ENCODE measurements at regions of chr15 and their contacts with region 1.

Region 1: DNA sequence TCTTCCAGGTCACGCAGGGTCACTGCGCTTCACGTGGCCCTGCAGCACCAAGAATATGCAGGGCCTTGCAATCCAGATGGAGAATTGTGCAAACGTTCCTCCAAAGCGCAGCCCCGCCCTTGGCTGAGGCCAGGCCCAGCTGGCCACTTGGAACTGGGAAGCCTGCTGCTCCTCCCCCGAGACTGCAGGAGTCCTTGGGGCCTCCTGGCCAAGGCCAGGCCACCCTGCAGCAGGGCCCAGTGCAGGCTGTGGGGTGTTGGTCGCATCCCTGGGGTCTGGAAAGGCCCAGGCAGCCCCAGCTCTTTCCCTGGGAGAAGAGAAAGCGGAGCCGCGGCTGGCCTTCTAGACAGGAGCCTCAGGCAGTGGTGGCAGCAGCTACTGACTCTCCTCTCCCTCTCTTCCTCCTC is 103.7 kb downstream of the TMEM266 start:
- DNase-seq: no peak
- ATAC-seq: no peak
- H3K4me3 ChIP-seq: no peak overlapping the region
- H3K4me3 Mint-ChIP-seq: no peak overlapping the region
- H3K27ac ChIP-seq: no peak overlapping the region
- H3K27ac Mint-ChIP-seq: no peak overlapping the region
- H3K4me1 ChIP-seq: no peaks in the 10 kb centered on the region
- H3K4me1 Mint-ChIP-seq: no peaks in the 10 kb centered on the region
- H3K27me3 ChIP-seq: no peaks in the 10 kb centered on the region
- H3K27me3 Mint-ChIP-seq: no peaks in the 10 kb centered on the region
- CTCF ChIP-seq: no peak

Region 2: GRCh38 chr15:75836953-75837321 is 326.5 kb before region 1 on chr15:
- CTCF ChIA-PET with region 1: no interaction called
- POLR2A ChIA-PET with region 1: no interaction called
- intact Hi-C with region 1: no loop called
- DNase-seq: peak in 7 of 9 experiments; percentile 11 to 70 (median 45)
- ATAC-seq: peak; percentile 90
- H3K4me3 ChIP-seq: no peak overlapping the region
- H3K4me3 Mint-ChIP-seq: no peak overlapping the region
- H3K27ac ChIP-seq: peak overlapping the region in 1 of 2 experiments; percentile 30
- H3K27ac Mint-ChIP-seq: no peak overlapping the region
- H3K4me1 ChIP-seq: no peaks in the 10 kb centered on the region
- H3K4me1 Mint-ChIP-seq: peaks cover 4% of the 10 kb centered on the region
- H3K27me3 ChIP-seq: no peaks in the 10 kb centered on the region
- H3K27me3 Mint-ChIP-seq: no peaks in the 10 kb centered on the region
- CTCF ChIP-seq: no peak

Region 3: GRCh38 chr15:75903331-75904239 is 259.9 kb before region 1 on chr15 and contains the start of gene FBXO22:
- CTCF ChIA-PET with region 1: no interaction called
- POLR2A ChIA-PET with region 1: no interaction called
- intact Hi-C with region 1: no loop called
- DNase-seq: peak; percentile 78 to 93 (median 88)
- ATAC-seq: peak; percentile 90
- H3K4me3 ChIP-seq: peak within 1 kb of the TSS; percentile 83 to 84
- H3K4me3 Mint-ChIP-seq: peak within 1 kb of the TSS; percentile 98
- H3K27ac ChIP-seq: peak within 1 kb of the TSS; percentile 63 to 68
- H3K27ac Mint-ChIP-seq: peak within 1 kb of the TSS; percentile 95
- H3K4me1 ChIP-seq: peaks cover 19% of the 10 kb centered on the region
- H3K4me1 Mint-ChIP-seq: peaks cover 49% of the 10 kb centered on the region
- H3K27me3 ChIP-seq: no peaks in the 10 kb centered on the region
- H3K27me3 Mint-ChIP-seq: no peaks in the 10 kb centered on the region
- CTCF ChIP-seq: no peak
- total RNA-seq, gene FBXO22: 6.1 to 6.4 TPM

Region 4: DNA sequence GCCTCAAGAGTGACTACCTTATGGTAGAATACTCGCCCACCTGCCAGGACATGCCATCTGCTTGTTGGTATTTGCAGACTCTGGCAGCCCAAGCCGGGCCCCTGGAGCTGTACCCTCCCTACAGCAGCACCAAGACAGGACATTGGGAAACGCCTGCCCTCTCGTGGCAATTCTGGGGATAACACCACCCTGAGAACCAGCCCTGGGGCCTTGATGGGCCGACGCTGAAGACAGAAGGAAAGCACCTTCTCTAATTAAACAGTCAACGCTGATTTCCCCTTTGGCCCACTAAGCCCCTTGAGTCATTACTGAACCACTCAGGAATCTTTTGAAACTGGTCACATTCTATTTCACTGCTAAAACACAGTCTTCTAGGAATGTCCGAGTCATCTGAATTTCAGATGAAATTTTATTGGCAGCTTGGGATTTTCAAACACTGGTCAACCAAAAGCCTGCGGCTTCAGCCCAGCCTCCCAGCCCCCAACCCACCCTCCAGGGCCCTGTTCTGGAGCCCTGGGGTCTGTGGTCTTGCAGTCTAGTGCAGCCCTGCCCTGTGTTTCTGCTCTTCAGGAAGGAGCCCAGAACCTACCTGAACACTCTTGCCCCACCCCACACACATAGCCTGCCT is 12.4 kb before region 1 on chr15:
- CTCF ChIA-PET with region 1: interaction called, 19 read pairs
- POLR2A ChIA-PET with region 1: no interaction called
- intact Hi-C with region 1: no loop called
- DNase-seq: peak; percentile 59 to 80 (median 72)
- ATAC-seq: peak; percentile 88
- H3K4me3 ChIP-seq: no peak overlapping the region
- H3K4me3 Mint-ChIP-seq: no peak overlapping the region
- H3K27ac ChIP-seq: no peak overlapping the region
- H3K27ac Mint-ChIP-seq: no peak overlapping the region
- H3K4me1 ChIP-seq: no peaks in the 10 kb centered on the region
- H3K4me1 Mint-ChIP-seq: peaks cover 13% of the 10 kb centered on the region
- H3K27me3 ChIP-seq: peaks cover 0 to 3% of the 10 kb centered on the region in 2 experiments
- H3K27me3 Mint-ChIP-seq: peaks cover 10% of the 10 kb centered on the region
- CTCF ChIP-seq: peak; percentile 81

Measured in CD8-positive, alpha-beta T cell (primary cell).